ENCODE measurements at regions of chr12 and their contacts with region 1.

Region 1: GRCh38 chr12:59149997-59150642 is 229.8 kb upstream of the LRIG3 start:
- DNase-seq: peak; percentile 77
- ATAC-seq: peak; percentile 96
- H3K4me3 ChIP-seq: no peak overlapping the region
- H3K27ac ChIP-seq: no peak overlapping the region
- H3K4me1 ChIP-seq: no peaks in the 10 kb centered on the region
- H3K27me3 ChIP-seq: no peaks in the 10 kb centered on the region
- CTCF ChIP-seq: peak; percentile 92
- EP300 ChIP-seq: no peak
- POLR2A ChIP-seq: no peak
- RAD21 ChIP-seq: peak; percentile 76

Region 2: GRCh38 chr12:57983146-57983857 is 1166.8 kb before region 1 on chr12:
- CTCF ChIA-PET with region 1: interaction called, 17 read pairs
- POLR2A ChIA-PET with region 1: no interaction called
- in situ Hi-C with region 1: loop called (anchors 25 kb)
- intact Hi-C with region 1: loop called (anchors 1 kb)
- DNase-seq: peak; percentile 12
- ATAC-seq: no peak
- H3K4me3 ChIP-seq: no peak overlapping the region
- H3K27ac ChIP-seq: no peak overlapping the region
- H3K4me1 ChIP-seq: no peaks in the 10 kb centered on the region
- H3K27me3 ChIP-seq: peaks cover 0 to 8% of the 10 kb centered on the region in 2 experiments; a peak in 1 of 5 replicates
- CTCF ChIP-seq: peak; percentile 64
- EP300 ChIP-seq: no peak
- POLR2A ChIP-seq: no peak
- RAD21 ChIP-seq: no peak

Region 3: DNA sequence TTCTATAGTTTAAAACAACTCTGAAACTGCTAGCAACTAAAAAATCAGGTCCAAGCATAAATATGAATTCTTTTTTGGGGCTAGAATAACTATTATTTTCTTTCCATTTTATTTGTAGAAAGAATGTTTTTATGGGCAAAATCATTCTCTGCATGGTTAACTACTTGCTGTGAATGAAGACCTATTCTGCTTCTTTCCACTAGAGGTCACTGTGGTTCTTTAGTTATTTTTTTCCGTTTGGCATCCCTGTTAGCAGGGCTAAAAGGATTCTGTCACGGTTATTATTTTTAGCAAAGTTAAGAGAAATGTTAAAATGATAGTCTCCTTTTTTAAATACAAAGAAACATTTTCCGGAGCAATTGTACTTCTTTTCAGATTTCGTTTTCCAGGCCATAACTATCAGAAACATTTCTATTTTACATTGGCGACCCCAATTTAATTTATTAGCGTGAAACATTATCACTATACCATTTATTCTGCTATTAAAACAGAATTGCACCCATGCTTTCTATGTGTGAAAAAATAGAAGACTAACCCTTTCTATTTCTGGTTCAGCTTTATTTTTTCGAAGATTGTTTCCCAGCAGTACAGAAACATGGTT is 804.0 kb before region 1 on chr12:
- CTCF ChIA-PET with region 1: interaction called, 40 read pairs
- POLR2A ChIA-PET with region 1: no interaction called
- in situ Hi-C with region 1: loop called (anchors 10 kb)
- intact Hi-C with region 1: loop called (anchors 1 kb)
- DNase-seq: peak; percentile 4
- ATAC-seq: peak; percentile 51; the same call in 1 of the 3 replicates
- H3K4me3 ChIP-seq: no peak overlapping the region
- H3K27ac ChIP-seq: no peak overlapping the region
- H3K4me1 ChIP-seq: no peaks in the 10 kb centered on the region
- H3K27me3 ChIP-seq: no peaks in the 10 kb centered on the region
- CTCF ChIP-seq: peak; percentile 62
- EP300 ChIP-seq: no peak
- POLR2A ChIP-seq: no peak
- RAD21 ChIP-seq: peak; percentile 30; the same call in 1 of the 2 replicates

Region 4: GRCh38 chr12:58443273-58443980 is 706.7 kb before region 1 on chr12:
- CTCF ChIA-PET with region 1: no interaction called
- POLR2A ChIA-PET with region 1: no interaction called
- in situ Hi-C with region 1: no loop called
- intact Hi-C with region 1: loop called (anchors 5 kb)
- DNase-seq: peak; percentile 28
- ATAC-seq: peak; percentile 83
- H3K4me3 ChIP-seq: no peak overlapping the region
- H3K27ac ChIP-seq: no peak overlapping the region
- H3K4me1 ChIP-seq: no peaks in the 10 kb centered on the region
- H3K27me3 ChIP-seq: no peaks in the 10 kb centered on the region
- CTCF ChIP-seq: peak; percentile 52
- EP300 ChIP-seq: no peak
- POLR2A ChIP-seq: no peak
- RAD21 ChIP-seq: no peak

Region 5: GRCh38 chr12:59113831-59114615 is 36.1 kb before region 1 on chr12:
- CTCF ChIA-PET with region 1: interaction called, 36 read pairs
- POLR2A ChIA-PET with region 1: no interaction called
- in situ Hi-C with region 1: no loop called
- intact Hi-C with region 1: loop called (anchors 1 kb)
- DNase-seq: peak; percentile 63
- ATAC-seq: peak; percentile 97
- H3K4me3 ChIP-seq: peak overlapping the region in 1 of 3 experiments; percentile 40; a peak in 1 of 6 replicates
- H3K27ac ChIP-seq: no peak overlapping the region
- H3K4me1 ChIP-seq: no peaks in the 10 kb centered on the region
- H3K27me3 ChIP-seq: no peaks in the 10 kb centered on the region
- CTCF ChIP-seq: peak; percentile 82
- EP300 ChIP-seq: no peak
- POLR2A ChIP-seq: no peak
- RAD21 ChIP-seq: peak; percentile 64; the same call in 1 of the 2 replicates

Measured in HepG2 (cell line).